Transverse colon (tissue), 4 donors: ENCODE measurements at regions of chr11 and their contacts with region 1.

Region 1: DNA sequence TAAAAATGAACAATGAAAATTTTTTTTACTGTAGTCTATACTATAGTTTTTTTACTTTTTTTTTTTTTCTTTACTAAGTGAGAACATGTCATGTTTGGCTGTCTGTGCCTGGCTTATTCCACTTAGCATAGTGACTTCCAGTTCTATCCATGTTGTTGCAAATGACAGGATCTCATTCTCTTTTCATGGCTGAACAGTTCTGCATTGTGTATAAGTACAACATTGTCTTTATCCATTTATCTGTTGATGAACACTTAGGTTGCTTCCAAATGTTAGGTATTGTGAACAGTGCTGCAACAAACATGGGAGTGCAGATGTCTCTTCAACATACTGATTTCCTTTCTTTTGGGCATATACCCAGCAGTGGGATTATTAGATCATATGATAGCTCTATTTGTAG is 88.1 kb upstream of the CCDC90B start:
- DNase-seq: no peak
- H3K4me3 ChIP-seq: no peak overlapping the region
- H3K27ac ChIP-seq: no peak overlapping the region
- H3K4me1 ChIP-seq: no peaks in the 10 kb centered on the region
- H3K27me3 ChIP-seq: no peaks in the 10 kb centered on the region
- CTCF ChIP-seq: no peak
- EP300 ChIP-seq: no peak
- POLR2A ChIP-seq: no peak

Region 2: GRCh38 chr11:83336993-83337392 is 37.3 kb before region 1 on chr11:
- in situ Hi-C with region 1: no loop called
- intact Hi-C with region 1: loop called (anchors 1 kb)
- DNase-seq: no peak
- H3K4me3 ChIP-seq: no peak overlapping the region
- H3K27ac ChIP-seq: no peak overlapping the region
- H3K4me1 ChIP-seq: no peaks in the 10 kb centered on the region
- H3K27me3 ChIP-seq: no peaks in the 10 kb centered on the region
- CTCF ChIP-seq: no peak
- EP300 ChIP-seq: no peak
- POLR2A ChIP-seq: no peak

Region 3: DNA sequence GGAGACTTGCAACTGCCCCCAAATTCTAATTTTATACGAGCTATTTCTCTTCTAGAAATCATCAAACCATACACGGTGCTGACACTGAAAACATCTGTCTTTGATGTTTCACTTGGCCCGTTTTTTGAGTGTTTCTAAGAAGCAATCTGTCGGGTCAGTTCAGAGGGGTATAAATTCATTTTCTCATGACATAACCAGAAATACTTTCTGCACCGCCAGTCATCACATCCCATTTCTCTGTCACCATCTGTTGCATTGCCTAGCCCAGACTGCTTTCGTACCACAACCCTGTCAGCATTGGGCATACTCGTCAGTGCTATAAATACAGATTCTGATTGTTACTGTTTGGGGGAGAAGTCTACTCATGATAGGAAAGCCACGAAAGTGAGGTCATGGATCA is 25.0 kb before region 1 on chr11:
- in situ Hi-C with region 1: no loop called
- intact Hi-C with region 1: loop called (anchors 1 kb)
- DNase-seq: no peak
- H3K4me3 ChIP-seq: no peak overlapping the region
- H3K27ac ChIP-seq: no peak overlapping the region
- H3K4me1 ChIP-seq: no peaks in the 10 kb centered on the region
- H3K27me3 ChIP-seq: no peaks in the 10 kb centered on the region
- CTCF ChIP-seq: no peak
- EP300 ChIP-seq: no peak
- POLR2A ChIP-seq: no peak

Region 4: DNA sequence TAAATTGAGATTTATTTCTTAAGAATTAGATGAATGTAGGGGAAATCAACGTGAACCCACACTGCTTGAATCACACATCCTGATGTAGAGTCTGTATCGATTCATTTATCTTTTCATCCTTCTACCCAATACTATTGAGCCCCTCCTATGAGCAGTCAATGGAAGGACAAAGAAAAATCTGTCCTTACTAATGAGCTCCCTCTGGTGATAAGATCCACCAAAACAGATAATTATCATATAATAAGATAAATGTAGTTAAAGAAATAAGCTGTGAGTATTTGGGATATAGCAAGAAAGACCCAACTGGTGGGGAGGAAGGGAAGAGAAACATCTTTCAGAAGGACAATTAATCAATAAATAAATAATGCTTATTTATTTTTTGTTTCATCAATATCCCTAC is 297.0 kb after region 1 on chr11:
- in situ Hi-C with region 1: no loop called
- intact Hi-C with region 1: no loop called
- DNase-seq: no peak
- H3K4me3 ChIP-seq: no peak overlapping the region
- H3K27ac ChIP-seq: no peak overlapping the region
- H3K4me1 ChIP-seq: no peaks in the 10 kb centered on the region
- H3K27me3 ChIP-seq: no peaks in the 10 kb centered on the region
- CTCF ChIP-seq: no peak
- EP300 ChIP-seq: no peak
- POLR2A ChIP-seq: no peak